ENCODE measurements at regions of chr9 and their contacts with region 1.

Region 1: GRCh38 chr9:93223260-93224180 is 39.6 kb downstream of the WNK2 start:
- DNase-seq: peak in 2 of 10 donors; percentile 20 to 67

Region 2: GRCh38 chr9:92963831-92964626 is 259.5 kb before region 1 on chr9:
- intact Hi-C with region 1: no loop called
- DNase-seq: peak in 2 of 10 donors; percentile 75 to 80

Region 3: DNA sequence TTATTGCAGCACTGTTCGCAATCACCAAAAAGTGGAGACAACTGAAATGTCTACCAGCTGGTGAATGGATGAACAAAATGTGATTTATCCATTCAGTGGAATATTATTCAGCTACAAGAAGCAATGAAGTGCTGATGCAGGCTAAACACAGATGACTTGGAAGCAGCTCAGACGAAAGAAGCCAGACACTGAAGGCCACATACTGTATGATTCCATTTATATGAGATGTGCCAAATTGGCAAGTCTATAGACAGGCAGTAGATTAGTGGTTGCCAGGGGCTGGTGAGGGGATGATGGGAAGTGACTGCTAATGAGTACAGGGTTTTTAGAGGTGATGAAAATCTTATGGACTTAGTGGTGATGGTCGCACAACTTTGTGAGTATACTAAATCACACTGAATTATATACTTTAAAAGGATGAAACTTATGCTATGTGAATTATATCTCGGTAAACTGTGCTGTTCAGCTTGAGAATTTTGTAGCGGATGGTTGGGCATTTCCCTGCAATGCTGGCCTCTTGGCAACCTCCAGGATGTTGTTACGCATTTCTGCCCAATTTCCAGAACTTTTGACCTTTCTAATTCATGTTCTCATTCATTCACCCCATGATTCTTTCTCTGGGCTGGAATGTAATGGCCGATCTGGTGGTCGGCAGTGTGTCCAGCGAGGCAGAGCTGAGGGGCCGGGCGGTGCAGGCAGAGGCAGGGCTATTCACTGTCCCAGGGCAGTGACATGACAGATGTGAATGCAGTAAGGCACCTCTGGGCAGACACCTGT is 61.5 kb before region 1 on chr9:
- intact Hi-C with region 1: no loop called
- DNase-seq: no peak

Region 4: DNA sequence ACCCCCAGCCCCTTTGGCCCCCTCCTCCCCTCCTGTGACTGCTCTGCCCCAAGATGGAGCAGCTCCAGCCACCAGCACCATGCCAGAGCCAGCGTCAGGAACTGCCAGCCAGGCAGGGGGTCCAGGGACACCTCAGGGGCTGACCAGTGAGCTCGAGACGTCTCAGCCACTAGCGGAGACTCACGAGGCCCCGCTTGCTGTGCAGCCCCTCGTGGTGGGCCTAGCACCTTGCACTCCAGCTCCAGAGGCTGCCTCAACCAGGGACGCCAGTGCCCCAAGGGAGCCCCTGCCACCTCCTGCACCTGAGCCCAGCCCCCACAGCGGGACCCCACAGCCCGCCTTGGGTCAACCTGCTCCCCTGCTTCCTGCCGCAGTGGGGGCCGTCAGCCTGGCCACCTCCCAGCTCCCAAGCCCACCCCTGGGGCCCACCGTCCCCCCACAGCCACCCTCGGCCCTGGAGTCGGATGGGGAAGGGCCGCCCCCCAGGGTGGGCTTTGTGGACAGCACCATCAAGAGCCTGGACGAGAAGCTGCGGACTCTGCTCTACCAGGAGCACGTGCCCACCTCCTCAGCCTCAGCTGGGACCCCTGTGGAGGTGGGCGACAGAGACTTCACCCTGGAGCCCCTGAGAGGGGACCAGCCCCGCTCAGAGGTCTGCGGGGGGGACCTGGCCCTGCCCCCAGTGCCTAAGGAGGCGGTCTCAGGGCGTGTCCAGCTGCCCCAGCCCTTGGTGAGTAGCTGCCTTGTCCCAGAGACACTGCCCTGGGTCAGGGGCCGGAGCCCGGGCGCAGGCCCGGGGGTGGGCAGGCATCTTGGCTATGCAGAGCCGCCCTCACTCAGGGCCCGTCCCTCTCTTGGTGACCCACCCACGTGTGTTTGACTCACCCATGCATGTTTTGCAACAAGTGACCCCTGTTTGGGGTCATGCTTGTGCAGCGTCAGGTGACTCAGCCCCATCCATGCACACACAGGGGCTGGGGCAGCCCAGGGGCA is 65.7 kb after region 1 on chr9:
- intact Hi-C with region 1: loop called (anchors 10 kb)
- DNase-seq: peak in 2 of 10 donors; percentile 73 to 80

Measured in posterior cingulate gyrus (tissue), 11 donors.